CD4-positive, alpha-beta T cell (primary cell): ENCODE measurements at regions of chr9 and their contacts with region 1.

Region 1: GRCh38 chr9:124934290-124934689 is 6.6 kb downstream of the GOLGA1 start:
- DNase-seq: no peak
- ATAC-seq: no peak
- H3K4me3 ChIP-seq: no peak overlapping the region
- H3K4me3 Mint-ChIP-seq: no peak overlapping the region
- H3K27ac ChIP-seq: no peak overlapping the region
- H3K27ac Mint-ChIP-seq: peak overlapping the region; percentile 3
- H3K4me1 ChIP-seq: no peaks in the 10 kb centered on the region
- H3K4me1 Mint-ChIP-seq: peaks cover 17% of the 10 kb centered on the region
- H3K27me3 ChIP-seq: no peaks in the 10 kb centered on the region
- H3K27me3 Mint-ChIP-seq: no peaks in the 10 kb centered on the region
- CTCF ChIP-seq: no peak

Region 2: DNA sequence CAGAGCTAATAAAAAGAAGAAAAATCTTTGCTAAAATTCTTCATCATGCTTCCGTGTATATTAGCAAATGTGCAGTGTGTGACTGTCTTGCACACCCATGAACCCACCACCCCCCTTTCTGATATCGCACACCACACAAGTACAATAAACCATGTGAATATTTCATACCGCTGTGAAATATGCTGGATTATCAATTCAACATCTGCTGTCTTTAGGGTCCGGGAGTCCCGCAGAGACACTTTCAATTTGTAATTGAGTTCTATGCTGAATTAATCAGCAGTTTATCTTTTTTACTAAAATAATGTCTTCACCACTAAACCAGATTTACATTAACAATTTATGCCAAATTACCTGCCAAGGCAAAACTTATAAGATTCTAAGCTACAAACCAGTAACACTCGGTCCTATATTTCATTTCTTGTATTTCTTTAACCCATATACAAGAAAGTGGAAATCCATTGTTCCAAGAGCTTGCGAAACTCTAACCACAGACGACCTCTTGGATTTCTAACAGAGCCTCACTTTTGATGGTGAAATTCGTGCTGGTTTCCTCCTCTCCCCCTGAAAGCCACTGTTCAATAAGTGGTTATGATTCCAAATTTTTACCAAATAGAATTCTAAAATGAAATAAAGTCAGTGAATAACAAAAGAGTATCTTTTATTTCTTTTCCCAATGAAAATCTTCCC is 563.3 kb before region 1 on chr9:
- CTCF ChIA-PET with region 1: no interaction called
- POLR2A ChIA-PET with region 1: no interaction called
- intact Hi-C with region 1: no loop called
- DNase-seq: no peak
- ATAC-seq: no peak
- H3K4me3 ChIP-seq: no peak overlapping the region
- H3K4me3 Mint-ChIP-seq: no peak overlapping the region
- H3K27ac ChIP-seq: no peak overlapping the region
- H3K27ac Mint-ChIP-seq: no peak overlapping the region
- H3K4me1 ChIP-seq: no peaks in the 10 kb centered on the region
- H3K4me1 Mint-ChIP-seq: peaks cover 69% of the 10 kb centered on the region
- H3K27me3 ChIP-seq: no peaks in the 10 kb centered on the region
- H3K27me3 Mint-ChIP-seq: no peaks in the 10 kb centered on the region
- CTCF ChIP-seq: no peak

Region 3: GRCh38 chr9:124839612-124840299 is 94.5 kb before region 1 on chr9:
- CTCF ChIA-PET with region 1: no interaction called
- POLR2A ChIA-PET with region 1: no interaction called
- intact Hi-C with region 1: no loop called
- DNase-seq: peak in 1 of 14 experiments; percentile 20
- ATAC-seq: no peak
- H3K4me3 ChIP-seq: no peak overlapping the region
- H3K4me3 Mint-ChIP-seq: no peak overlapping the region
- H3K27ac ChIP-seq: no peak overlapping the region
- H3K27ac Mint-ChIP-seq: no peak overlapping the region
- H3K4me1 ChIP-seq: no peaks in the 10 kb centered on the region
- H3K4me1 Mint-ChIP-seq: no peaks in the 10 kb centered on the region
- H3K27me3 ChIP-seq: peaks cover 3 to 19% of the 10 kb centered on the region in 2 experiments
- H3K27me3 Mint-ChIP-seq: peaks cover 41% of the 10 kb centered on the region
- CTCF ChIP-seq: no peak

Region 4: DNA sequence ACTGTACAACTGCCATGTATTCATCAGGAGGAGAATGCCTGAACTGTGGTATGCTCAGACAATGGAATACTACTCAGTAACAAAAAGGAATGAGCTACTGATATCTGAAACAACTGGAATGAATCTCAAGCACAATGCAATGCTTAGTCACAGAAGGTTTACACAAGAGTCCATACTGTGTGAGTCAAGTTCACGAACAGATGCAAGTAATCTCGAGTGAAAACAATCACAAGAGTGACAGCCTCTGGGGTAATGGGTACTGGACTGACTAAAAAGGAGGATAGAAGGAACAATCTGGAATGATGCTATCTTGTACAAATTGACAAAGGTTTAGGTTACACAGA is 26.1 kb after region 1 on chr9:
- CTCF ChIA-PET with region 1: no interaction called
- POLR2A ChIA-PET with region 1: interaction called, 11 read pairs
- intact Hi-C with region 1: no loop called
- DNase-seq: no peak
- ATAC-seq: no peak
- H3K4me3 ChIP-seq: no peak overlapping the region
- H3K4me3 Mint-ChIP-seq: no peak overlapping the region
- H3K27ac ChIP-seq: no peak overlapping the region
- H3K27ac Mint-ChIP-seq: no peak overlapping the region
- H3K4me1 ChIP-seq: peaks cover 19% of the 10 kb centered on the region
- H3K4me1 Mint-ChIP-seq: peaks cover 19% of the 10 kb centered on the region
- H3K27me3 ChIP-seq: no peaks in the 10 kb centered on the region
- H3K27me3 Mint-ChIP-seq: no peaks in the 10 kb centered on the region
- CTCF ChIP-seq: no peak

Region 5: DNA sequence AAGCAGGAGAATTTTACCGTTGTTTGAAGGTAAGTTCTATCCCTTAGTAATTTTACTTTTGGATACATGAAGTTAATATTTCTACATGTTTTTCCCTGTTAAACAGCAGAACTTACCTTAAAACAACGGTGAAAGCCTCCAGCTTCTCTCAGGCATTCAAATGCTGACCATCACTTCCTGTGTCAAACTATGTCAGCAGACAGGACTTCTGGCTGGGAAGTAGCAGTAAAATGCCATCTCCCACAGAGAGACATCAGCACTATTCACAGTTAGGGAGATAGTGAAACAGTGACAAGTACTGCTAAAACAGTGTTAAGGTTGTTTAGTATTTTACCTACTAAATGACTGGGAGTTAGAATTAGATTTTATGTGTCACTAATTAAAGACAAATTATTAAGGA is 40.8 kb after region 1 on chr9:
- CTCF ChIA-PET with region 1: no interaction called
- POLR2A ChIA-PET with region 1: no interaction called
- intact Hi-C with region 1: loop called in 1 of 2 experiments (anchors 5 kb)
- DNase-seq: no peak
- ATAC-seq: no peak
- H3K4me3 ChIP-seq: no peak overlapping the region
- H3K4me3 Mint-ChIP-seq: no peak overlapping the region
- H3K27ac ChIP-seq: no peak overlapping the region
- H3K27ac Mint-ChIP-seq: no peak overlapping the region
- H3K4me1 ChIP-seq: no peaks in the 10 kb centered on the region
- H3K4me1 Mint-ChIP-seq: no peaks in the 10 kb centered on the region
- H3K27me3 ChIP-seq: no peaks in the 10 kb centered on the region
- H3K27me3 Mint-ChIP-seq: no peaks in the 10 kb centered on the region
- CTCF ChIP-seq: no peak